ENCODE measurements at regions of chr7 and their contacts with region 1.

Region 1: GRCh38 chr7:90211391-90212148 is at the start of gene STEAP2:
- DNase-seq: peak; percentile 88
- H3K4me3 Mint-ChIP-seq: no peak within 1 kb of the TSS
- H3K27ac Mint-ChIP-seq: peak within 1 kb of the TSS; percentile 49
- H3K4me1 Mint-ChIP-seq: peaks cover 4% of the 10 kb centered on the region
- H3K27me3 Mint-ChIP-seq: no peaks in the 10 kb centered on the region
- CTCF ChIP-seq: peak; percentile 45
- total RNA-seq, gene STEAP2: 0.68 and 1.3 TPM in 2 replicates

Region 2: GRCh38 chr7:90165724-90166123 is 45.8 kb before region 1 on chr7:
- CTCF ChIA-PET with region 1: interaction called, 12 read pairs
- POLR2A ChIA-PET with region 1: no interaction called
- intact Hi-C with region 1: no loop called
- DNase-seq: no peak
- H3K4me3 Mint-ChIP-seq: no peak overlapping the region
- H3K27ac Mint-ChIP-seq: no peak overlapping the region
- H3K4me1 Mint-ChIP-seq: no peaks in the 10 kb centered on the region
- H3K27me3 Mint-ChIP-seq: no peaks in the 10 kb centered on the region
- CTCF ChIP-seq: no peak

Region 3: DNA sequence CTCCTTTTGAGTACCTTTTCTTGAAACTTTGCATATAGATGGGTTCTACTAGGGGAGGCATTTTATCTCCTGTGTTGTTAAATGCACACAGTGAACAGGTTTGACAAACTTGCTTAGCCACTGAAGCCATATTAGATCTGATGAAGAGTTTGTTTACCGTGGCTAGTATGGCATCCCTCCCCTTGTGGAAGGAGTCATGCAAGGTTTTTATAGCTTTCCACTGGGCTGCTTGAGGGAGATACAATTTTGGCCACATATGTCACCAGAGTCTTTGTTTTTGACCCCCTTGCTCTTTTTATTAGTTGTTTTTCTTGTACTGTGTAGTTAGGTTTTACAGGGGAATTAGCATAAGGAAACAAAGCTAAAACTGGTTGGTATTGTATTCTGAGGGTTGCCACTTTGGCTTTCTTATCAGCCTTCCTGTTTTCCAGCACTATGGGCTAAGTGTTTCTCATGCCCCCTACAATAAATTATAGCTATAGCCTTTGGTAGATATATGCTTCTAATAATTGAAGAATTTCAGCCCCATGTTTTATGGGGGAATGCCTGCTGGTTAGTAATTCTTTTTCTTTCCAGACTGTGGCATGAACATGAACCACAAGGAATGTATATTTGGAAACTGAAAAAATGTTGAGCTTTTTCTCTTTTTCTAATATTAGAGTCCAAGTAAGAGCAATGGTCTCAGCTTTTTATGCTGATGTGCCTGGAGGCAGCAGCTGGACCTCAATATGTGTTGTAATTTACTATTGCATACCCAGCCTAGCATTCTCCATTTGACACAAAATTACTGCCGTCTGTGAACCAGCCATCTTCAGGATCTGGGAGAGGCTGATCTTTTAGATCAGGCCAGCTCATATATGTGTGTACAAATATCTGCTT is 18.5 kb before region 1 on chr7:
- CTCF ChIA-PET with region 1: interaction called, 10 read pairs
- POLR2A ChIA-PET with region 1: interaction called, 6 read pairs
- intact Hi-C with region 1: no loop called
- DNase-seq: no peak
- H3K4me3 Mint-ChIP-seq: no peak overlapping the region
- H3K27ac Mint-ChIP-seq: no peak overlapping the region
- H3K4me1 Mint-ChIP-seq: no peaks in the 10 kb centered on the region
- H3K27me3 Mint-ChIP-seq: no peaks in the 10 kb centered on the region
- CTCF ChIP-seq: no peak

Region 4: DNA sequence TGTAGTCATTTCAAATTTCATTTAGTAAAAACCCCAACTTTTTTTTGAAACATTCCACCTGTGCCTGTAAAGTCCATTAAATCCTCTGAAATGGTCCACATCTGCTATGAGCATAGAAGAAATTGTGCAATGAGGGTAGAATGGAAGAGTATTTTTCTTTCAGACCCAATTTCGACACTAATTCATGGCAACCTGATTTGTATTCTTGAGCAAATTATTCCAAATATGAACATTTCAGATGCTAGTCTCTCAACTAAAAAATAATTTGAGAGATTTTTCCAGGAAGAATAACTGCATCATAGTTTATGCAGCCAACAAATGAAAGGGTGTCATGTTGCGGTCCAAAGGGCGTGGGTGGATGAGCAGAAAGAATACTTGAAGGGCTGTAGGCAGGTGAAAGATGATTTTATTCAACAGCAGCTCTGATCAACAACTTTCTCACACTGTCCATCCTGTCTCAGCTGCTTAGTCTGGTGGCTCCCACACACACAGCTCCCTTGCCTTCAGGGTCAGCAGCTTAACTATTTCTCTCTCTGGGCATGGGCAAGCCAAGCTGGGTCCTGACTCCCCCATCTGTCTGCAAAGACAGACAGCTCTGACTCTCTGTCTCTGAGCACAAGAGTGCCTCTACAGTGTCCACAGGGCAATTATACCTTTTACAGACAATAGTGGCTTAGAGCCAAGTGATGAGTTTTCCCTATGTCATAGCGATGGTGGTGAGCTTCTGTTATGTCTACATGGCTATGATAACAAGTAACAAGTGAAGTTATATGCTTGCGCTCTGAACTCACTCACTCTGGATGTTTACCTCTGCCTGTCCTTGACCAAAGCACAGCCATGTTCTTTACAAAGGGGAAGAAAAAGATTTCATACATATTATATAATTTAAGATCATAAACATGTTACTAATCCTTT is 11.5 kb after region 1 on chr7:
- CTCF ChIA-PET with region 1: interaction called, 24 read pairs
- POLR2A ChIA-PET with region 1: interaction called, 3 read pairs
- intact Hi-C with region 1: no loop called
- DNase-seq: peak; percentile 81
- H3K4me3 Mint-ChIP-seq: no peak overlapping the region
- H3K27ac Mint-ChIP-seq: no peak overlapping the region
- H3K4me1 Mint-ChIP-seq: peaks cover 6% of the 10 kb centered on the region
- H3K27me3 Mint-ChIP-seq: peaks cover 27% of the 10 kb centered on the region
- CTCF ChIP-seq: no peak

Region 5: DNA sequence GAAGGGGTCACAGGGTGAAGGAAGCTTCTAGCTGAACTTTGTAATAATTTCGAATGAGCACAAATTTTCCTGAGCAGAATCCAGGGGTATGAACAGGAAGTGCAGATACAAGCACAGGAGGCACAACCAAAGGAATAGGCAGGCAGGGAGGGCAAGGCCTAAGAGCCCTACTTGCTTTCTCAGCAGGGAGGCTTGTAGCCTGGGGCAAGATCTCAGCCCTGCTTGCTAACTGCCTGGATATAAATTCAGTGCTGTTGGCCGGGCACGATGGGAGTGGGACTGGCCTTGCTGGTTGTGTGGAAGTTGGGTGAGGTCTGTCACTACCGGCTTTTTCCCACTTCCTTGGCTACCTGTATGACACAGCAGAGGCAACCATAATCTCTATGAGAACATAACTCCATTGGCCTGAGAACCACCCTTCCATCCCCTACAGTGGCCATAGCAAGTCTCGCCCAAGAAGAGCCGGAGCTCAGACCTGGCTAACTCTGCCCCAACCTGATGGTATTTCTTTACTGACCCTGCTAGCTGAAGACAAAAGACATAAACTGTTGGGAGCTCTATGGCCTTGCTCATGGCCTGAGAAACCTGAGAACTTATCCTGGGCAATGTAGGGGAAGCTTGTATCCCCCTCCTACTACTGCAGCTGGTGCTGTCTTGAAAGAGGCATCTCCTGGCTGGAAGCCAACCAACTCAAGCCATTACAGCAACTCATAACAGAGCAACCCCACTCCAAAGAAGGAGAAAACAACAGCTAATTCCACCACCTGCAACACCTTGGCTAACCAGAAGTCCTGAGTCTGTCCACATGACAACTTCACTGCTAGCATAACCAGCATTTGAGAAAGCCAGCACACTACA is 219.3 kb after region 1 on chr7:
- CTCF ChIA-PET with region 1: interaction called, 11 read pairs
- POLR2A ChIA-PET with region 1: no interaction called
- intact Hi-C with region 1: no loop called
- DNase-seq: no peak
- H3K4me3 Mint-ChIP-seq: no peak overlapping the region
- H3K27ac Mint-ChIP-seq: no peak overlapping the region
- H3K4me1 Mint-ChIP-seq: no peaks in the 10 kb centered on the region
- H3K27me3 Mint-ChIP-seq: peaks cover 10% of the 10 kb centered on the region
- CTCF ChIP-seq: no peak

Measured in MCF 10A (cell line).